Psoas muscle (tissue), 8 donors: ENCODE measurements at regions of chr14 and their contacts with region 1.

Region 1: GRCh38 chr14:38880643-38881524 is 222.2 kb downstream of the SEC23A start:
- DNase-seq: no peak
- ATAC-seq: no peak
- H3K4me3 ChIP-seq: no peak overlapping the region
- H3K27ac ChIP-seq: no peak overlapping the region
- H3K4me1 ChIP-seq: no peaks in the 10 kb centered on the region
- H3K27me3 ChIP-seq: no peaks in the 10 kb centered on the region
- CTCF ChIP-seq: no peak

Region 2: DNA sequence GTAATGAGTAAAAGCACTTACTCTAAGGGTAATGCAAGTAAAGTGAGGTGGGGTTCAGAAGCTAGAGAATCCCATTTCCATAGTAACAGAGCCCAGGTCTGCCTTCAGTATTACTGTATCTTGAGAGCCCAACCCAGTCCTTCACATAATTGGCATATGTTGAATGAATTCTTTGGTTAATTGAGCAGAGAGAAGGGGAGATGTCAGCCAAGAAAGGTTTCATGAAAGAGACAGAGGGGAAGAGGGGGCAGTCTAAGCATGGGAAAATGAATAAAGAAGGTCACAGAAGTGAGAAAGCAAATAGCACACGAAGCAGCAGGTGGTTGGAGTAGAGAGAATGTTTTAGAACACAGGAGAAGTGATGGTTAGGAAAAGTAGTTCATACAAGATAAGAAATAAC is 148.9 kb before region 1 on chr14:
- intact Hi-C with region 1: loop called in 1 of 2 experiments (anchors 5 kb)
- DNase-seq: no peak
- ATAC-seq: no peak
- H3K4me3 ChIP-seq: no peak overlapping the region
- H3K27ac ChIP-seq: no peak overlapping the region
- H3K4me1 ChIP-seq: no peaks in the 10 kb centered on the region
- H3K27me3 ChIP-seq: no peaks in the 10 kb centered on the region
- CTCF ChIP-seq: no peak